Ovary (tissue), 10 donors: ENCODE measurements at regions of chr3 and their contacts with region 1.

Region 1: DNA sequence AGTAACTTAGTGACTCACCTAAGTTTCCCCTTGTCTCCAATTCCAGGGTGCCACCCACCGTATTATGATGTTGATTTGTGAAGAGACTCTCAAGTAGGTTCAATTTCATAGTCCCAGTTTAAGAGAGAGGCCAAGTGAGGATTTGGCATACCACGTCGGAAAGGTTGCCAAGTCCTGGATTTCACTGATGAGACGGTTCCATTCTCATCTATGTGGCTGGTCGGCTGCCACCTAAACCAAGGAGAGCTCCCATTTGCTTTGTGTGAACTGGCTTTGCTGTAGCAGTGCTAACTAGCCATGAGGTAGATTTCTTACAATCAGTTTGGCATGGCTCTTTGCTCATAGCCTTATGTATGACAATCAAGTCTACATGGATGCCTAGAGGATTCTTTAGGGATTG is 653.6 kb downstream of the NLGN1 start:
- DNase-seq: no peak
- H3K4me3 ChIP-seq: no peak overlapping the region
- H3K27ac ChIP-seq: no peak overlapping the region
- H3K4me1 ChIP-seq: no peaks in the 10 kb centered on the region
- H3K27me3 ChIP-seq: no peaks in the 10 kb centered on the region
- CTCF ChIP-seq: no peak
- EP300 ChIP-seq: no peak
- POLR2A ChIP-seq: no peak

Region 2: DNA sequence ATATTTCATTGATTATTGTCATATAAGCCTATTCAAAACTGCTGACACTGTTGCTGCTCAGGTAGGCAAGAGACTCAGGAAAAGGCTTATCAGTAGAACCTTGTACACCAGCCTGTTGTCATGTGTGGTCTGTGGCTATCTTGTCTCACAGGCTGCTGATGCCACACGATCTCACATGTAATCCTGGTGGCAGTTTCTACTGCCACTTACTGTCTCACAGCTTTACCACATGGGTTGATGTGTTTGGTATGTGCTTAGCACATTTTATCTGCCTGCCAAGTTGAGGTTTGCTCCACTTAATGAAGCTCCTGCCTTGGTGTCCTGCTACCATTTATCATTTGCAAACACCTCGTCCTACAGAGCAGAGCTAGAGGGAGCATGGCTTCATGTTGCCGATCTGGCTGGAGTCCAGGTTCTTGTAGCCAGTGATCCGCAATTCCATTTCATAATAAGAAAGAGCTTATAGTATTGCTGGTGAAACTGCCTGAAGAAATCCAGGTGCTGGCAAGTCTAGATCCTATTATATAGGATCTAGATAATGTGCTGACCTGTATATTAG is 15.8 kb before region 1 on chr3:
- intact Hi-C with region 1: loop called in 1 of 4 experiments (anchors 1 kb)
- DNase-seq: no peak
- H3K4me3 ChIP-seq: no peak overlapping the region
- H3K27ac ChIP-seq: no peak overlapping the region
- H3K4me1 ChIP-seq: peaks cover 2% of the 10 kb centered on the region
- H3K27me3 ChIP-seq: no peaks in the 10 kb centered on the region
- CTCF ChIP-seq: no peak
- EP300 ChIP-seq: no peak
- POLR2A ChIP-seq: no peak

Region 3: DNA sequence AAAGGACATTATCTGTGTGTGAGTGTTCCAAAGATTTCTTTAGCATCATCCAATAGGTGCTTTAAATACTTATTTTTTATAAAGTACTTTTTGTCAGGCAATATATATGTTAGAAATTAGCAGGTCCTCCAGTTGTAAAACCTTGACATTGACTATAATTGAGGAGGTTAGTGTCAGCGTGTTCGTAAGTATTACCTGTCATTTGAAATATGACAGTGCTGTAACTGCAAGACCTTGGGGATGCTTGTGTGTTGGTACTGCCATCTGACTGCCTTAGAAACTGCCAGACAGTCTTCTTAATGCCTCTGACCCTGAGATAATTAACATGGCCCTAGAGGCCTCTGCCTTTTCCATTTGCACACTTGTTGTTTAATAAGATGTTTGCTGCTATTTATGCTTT is 978.6 kb after region 1 on chr3:
- intact Hi-C with region 1: no loop called
- DNase-seq: no peak
- H3K4me3 ChIP-seq: no peak overlapping the region
- H3K27ac ChIP-seq: no peak overlapping the region
- H3K4me1 ChIP-seq: no peaks in the 10 kb centered on the region
- H3K27me3 ChIP-seq: no peaks in the 10 kb centered on the region
- CTCF ChIP-seq: no peak
- EP300 ChIP-seq: no peak
- POLR2A ChIP-seq: no peak